Activated CD8-positive, alpha-beta memory T cell treated with anti-CD3 and anti-CD28 coated beads, Interleukin-2, amount 10 ng/mL, durations not matched to agents 7 days and 5 days (primary cell): ENCODE measurements at regions of chr10 and their contacts with region 1.

Region 1: GRCh38 chr10:22682237-22683139 is 31.9 kb downstream of the PIP4K2A start:
- DNase-seq: peak; percentile 86
- ATAC-seq: peak; percentile 51
- H3K4me3 Mint-ChIP-seq: peak overlapping the region; percentile 64
- H3K27ac Mint-ChIP-seq: peak overlapping the region; percentile 99
- H3K4me1 Mint-ChIP-seq: peaks cover 84% of the 10 kb centered on the region
- H3K27me3 Mint-ChIP-seq: no peaks in the 10 kb centered on the region

Region 2: GRCh38 chr10:22251751-22252223 is 430.7 kb before region 1 on chr10:
- CTCF ChIA-PET with region 1: no interaction called
- DNase-seq: peak; percentile 81
- ATAC-seq: peak; percentile 66
- H3K4me3 Mint-ChIP-seq: peak overlapping the region; percentile 96
- H3K27ac Mint-ChIP-seq: peak overlapping the region; percentile 98
- H3K4me1 Mint-ChIP-seq: peaks cover 25% of the 10 kb centered on the region
- H3K27me3 Mint-ChIP-seq: peaks cover 24% of the 10 kb centered on the region

Region 3: GRCh38 chr10:22669163-22669711 is 13.3 kb before region 1 on chr10:
- CTCF ChIA-PET with region 1: interaction called, 15 read pairs
- DNase-seq: no peak
- ATAC-seq: peak; percentile 65
- H3K4me3 Mint-ChIP-seq: peak overlapping the region; percentile 58
- H3K27ac Mint-ChIP-seq: peak overlapping the region; percentile 90
- H3K4me1 Mint-ChIP-seq: peaks cover 81% of the 10 kb centered on the region
- H3K27me3 Mint-ChIP-seq: no peaks in the 10 kb centered on the region

Region 4: DNA sequence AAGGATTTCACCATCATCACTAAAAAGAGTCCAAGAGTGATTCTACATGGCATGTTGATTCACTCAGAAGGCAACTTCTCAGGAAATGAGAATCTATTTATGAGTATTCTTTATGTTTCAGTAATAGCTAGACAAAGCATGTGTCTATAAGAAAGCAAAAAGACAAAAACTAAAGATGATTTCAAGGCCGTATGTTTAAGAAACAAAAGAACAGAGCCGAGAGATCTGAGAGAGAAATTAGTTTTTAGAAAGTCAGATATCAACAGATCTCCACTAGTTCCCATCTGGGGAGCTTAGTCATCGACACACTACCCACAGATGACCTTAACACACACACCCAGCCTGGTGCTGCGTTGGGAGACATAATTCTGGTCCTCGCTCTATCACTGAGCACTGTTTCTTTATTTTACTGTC is 10.9 kb after region 1 on chr10:
- CTCF ChIA-PET with region 1: interaction called, 10 read pairs
- DNase-seq: no peak
- ATAC-seq: peak; percentile 84
- H3K4me3 Mint-ChIP-seq: peak overlapping the region; percentile 15
- H3K27ac Mint-ChIP-seq: peak overlapping the region; percentile 70
- H3K4me1 Mint-ChIP-seq: peaks cover 83% of the 10 kb centered on the region
- H3K27me3 Mint-ChIP-seq: no peaks in the 10 kb centered on the region

Region 5: DNA sequence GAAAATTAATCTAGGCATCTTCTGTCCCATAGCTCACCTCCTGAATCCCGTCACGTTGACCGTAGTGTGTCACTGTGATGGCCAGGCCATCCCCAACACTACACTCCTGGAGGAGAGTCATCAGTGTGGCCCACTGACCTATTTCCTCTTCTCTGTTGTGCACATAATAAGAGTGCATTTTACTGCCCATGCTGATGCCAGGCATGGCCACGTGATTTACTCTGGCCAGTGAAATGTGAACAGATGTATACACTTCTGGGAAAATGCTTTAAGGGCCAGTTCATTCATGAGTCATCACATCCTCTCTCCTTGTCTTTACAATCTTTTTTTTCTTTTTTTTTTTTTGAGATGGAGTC is 133.8 kb after region 1 on chr10:
- CTCF ChIA-PET with region 1: no interaction called
- DNase-seq: no peak
- ATAC-seq: peak; percentile 45
- H3K4me3 Mint-ChIP-seq: no peak overlapping the region
- H3K27ac Mint-ChIP-seq: no peak overlapping the region
- H3K4me1 Mint-ChIP-seq: peaks cover 11% of the 10 kb centered on the region
- H3K27me3 Mint-ChIP-seq: peaks cover 5% of the 10 kb centered on the region